Ascending aorta (tissue), 2 donors: ENCODE measurements at regions of chr7 and their contacts with region 1.

Region 1: DNA sequence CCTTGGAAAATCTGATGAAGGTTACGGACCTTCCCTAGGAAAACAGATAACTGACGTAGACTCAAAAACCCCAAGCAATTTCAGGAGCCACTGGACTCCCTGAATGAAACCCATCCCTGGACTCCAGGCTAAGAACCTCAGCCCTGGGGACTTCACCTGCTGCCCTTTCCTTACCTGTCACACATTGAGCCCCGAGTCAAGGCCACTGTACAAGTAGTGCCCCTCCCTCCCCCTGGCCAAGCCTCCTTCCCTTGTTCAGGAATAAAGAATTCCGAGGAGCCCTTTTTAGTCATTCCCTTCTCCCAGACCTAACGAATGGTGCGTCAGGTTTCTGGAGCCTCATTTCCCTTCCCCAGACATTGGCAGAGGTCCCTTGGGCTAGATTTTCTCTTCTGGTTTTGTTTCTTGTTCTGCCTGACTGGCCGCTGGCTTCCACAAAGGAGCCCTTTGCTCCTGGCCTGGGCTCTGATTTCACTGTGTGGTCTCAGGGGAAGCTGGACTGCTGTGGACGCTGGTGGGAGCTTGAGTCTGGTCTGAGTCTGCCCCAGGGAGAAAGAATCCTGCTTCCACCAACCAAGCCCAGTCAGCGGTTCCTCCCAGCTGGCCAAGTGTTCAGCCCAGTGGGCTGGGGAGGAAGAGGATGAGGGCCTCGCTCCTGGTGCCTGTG is 31.7 kb downstream of the ZNF775 start:
- DNase-seq: no peak
- H3K4me3 ChIP-seq: no peak overlapping the region
- H3K27ac ChIP-seq: no peak overlapping the region
- H3K4me1 ChIP-seq: peaks cover 2 to 6% of the 10 kb centered on the region in 2 donors
- H3K27me3 ChIP-seq: no peaks in the 10 kb centered on the region
- CTCF ChIP-seq: no peak

Region 2: DNA sequence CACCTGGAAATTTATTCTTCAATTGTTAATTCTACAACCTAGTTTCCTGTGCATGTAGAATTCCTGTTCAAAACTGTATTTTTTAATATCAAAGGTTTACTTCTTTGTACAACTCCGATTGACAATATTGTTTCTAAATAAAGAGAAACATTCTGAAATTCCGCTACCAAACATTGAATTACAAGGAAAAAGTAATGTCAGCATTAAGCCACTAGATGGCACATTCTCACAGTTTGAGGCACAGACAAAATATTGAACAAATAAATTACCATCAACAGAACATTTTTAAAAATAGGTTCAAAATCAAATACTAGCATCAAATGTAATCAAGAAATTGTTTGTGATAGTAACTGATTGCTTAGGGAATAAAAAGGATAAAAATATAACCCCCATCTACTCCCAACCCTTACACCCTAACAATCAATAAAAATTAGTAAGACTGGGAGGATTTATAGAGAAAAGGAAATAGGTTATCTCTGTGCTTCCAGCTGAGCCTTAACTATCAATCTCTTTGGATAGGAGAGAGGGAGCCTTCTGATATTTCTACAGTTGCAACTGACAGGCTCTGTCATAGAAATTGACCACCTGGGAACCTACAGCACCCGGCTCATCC is 1906.8 kb before region 1 on chr7:
- intact Hi-C with region 1: loop called (anchors 5 kb)
- DNase-seq: no peak
- H3K4me3 ChIP-seq: no peak overlapping the region
- H3K27ac ChIP-seq: no peak overlapping the region
- H3K4me1 ChIP-seq: no peaks in the 10 kb centered on the region
- H3K27me3 ChIP-seq: no peaks in the 10 kb centered on the region
- CTCF ChIP-seq: peak; percentile 46 to 69 (median 68)